ENCODE measurements at regions of chr18 and their contacts with region 1.

Region 1: GRCh38 chr18:267688-268552 is at the start of gene THOC1:
- DNase-seq: peak; percentile 88 to 95 (median 93)
- ATAC-seq: peak; percentile 96
- H3K4me3 ChIP-seq: peak within 1 kb of the TSS; percentile 99
- H3K4me3 Mint-ChIP-seq: peak within 1 kb of the TSS; percentile 93 to 100 (median 98)
- H3K27ac ChIP-seq: peak within 1 kb of the TSS; percentile 98
- H3K27ac Mint-ChIP-seq: peak within 1 kb of the TSS; percentile 99 to 100 (median 100)
- H3K4me1 ChIP-seq: peaks cover 11 to 18% of the 10 kb centered on the region in 2 donors
- H3K4me1 Mint-ChIP-seq: peaks cover 19 to 51% (median 38%) of the 10 kb centered on the region in 7 donors
- H3K27me3 ChIP-seq: no peaks in the 10 kb centered on the region
- H3K27me3 Mint-ChIP-seq: no peaks in the 10 kb centered on the region
- total RNA-seq, gene THOC1: 56.7 to 93.7 (median 74.5) TPM

Region 2: GRCh38 chr18:111292-112014 is 156.5 kb before region 1 on chr18:
- CTCF ChIA-PET with region 1: no interaction called
- POLR2A ChIA-PET with region 1: no interaction called
- intact Hi-C with region 1: loop called (anchors 5 kb)
- DNase-seq: peak; percentile 60 to 77 (median 75)
- ATAC-seq: no peak
- H3K4me3 ChIP-seq: peak overlapping the region; percentile 36
- H3K4me3 Mint-ChIP-seq: peak overlapping the region; percentile 79 to 91 (median 89)
- H3K27ac ChIP-seq: peak overlapping the region; percentile 82
- H3K27ac Mint-ChIP-seq: peak overlapping the region; percentile 85 to 99 (median 90)
- H3K4me1 ChIP-seq: peaks cover 0 to 5% of the 10 kb centered on the region in 2 donors
- H3K4me1 Mint-ChIP-seq: peaks cover 4 to 14% (median 7%) of the 10 kb centered on the region in 7 donors
- H3K27me3 ChIP-seq: no peaks in the 10 kb centered on the region
- H3K27me3 Mint-ChIP-seq: peaks cover 0 to 3% (median 0%) of the 10 kb centered on the region in 5 donors

Region 3: DNA sequence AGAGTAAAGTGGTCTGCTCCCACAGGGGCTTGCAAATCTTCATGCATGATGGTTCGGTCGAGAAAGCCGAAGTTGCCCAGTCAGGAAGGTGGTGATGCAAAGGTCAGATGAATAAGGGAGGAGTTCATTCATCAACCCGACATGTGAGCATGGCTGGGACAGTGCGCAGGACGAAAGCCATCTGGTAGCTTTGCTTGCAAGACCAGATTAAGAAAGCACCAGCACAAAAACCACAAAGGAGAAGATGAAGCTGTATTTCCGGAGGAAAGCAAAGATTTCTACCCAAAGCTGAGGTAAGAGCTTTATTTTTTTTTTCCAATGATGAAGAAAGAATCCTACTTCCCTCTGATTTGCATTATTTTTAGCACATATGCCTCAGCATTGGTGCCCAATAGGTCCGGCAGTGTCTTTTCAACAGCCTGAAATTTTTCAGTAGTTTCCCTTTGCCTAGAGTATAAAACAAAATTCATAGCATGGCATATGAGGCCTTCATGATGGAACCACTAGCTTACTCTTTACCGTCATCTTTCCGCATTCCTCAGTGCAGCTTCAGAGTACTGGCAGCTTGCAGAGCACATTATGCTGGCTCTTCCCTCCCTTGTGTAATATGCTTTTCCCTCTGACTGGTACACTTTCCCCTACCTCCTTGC is 111.9 kb after region 1 on chr18:
- CTCF ChIA-PET with region 1: no interaction called
- POLR2A ChIA-PET with region 1: no interaction called
- intact Hi-C with region 1: no loop called
- DNase-seq: no peak
- ATAC-seq: peak; percentile 75
- H3K4me3 ChIP-seq: no peak overlapping the region
- H3K4me3 Mint-ChIP-seq: no peak overlapping the region
- H3K27ac ChIP-seq: no peak overlapping the region
- H3K27ac Mint-ChIP-seq: peak overlapping the region in 1 of 9 donors; percentile 2
- H3K4me1 ChIP-seq: no peaks in the 10 kb centered on the region
- H3K4me1 Mint-ChIP-seq: peaks cover 0 to 3% (median 0%) of the 10 kb centered on the region in 7 donors
- H3K27me3 ChIP-seq: peaks cover 0 to 2% of the 10 kb centered on the region in 2 donors
- H3K27me3 Mint-ChIP-seq: peaks cover 14 to 35% (median 23%) of the 10 kb centered on the region in 5 donors

Region 4: GRCh38 chr18:596288-596881 is 328.5 kb after region 1 on chr18:
- CTCF ChIA-PET with region 1: no interaction called
- POLR2A ChIA-PET with region 1: interaction called, 3 read pairs
- intact Hi-C with region 1: loop called (anchors 2 kb)
- DNase-seq: peak in 1 of 9 donors; percentile 52
- ATAC-seq: peak; percentile 75
- H3K4me3 ChIP-seq: no peak overlapping the region
- H3K4me3 Mint-ChIP-seq: peak overlapping the region in 8 of 10 donors; percentile 55 to 64 (median 56)
- H3K27ac ChIP-seq: peak overlapping the region; percentile 33
- H3K27ac Mint-ChIP-seq: peak overlapping the region in 7 of 9 donors; percentile 8 to 83 (median 73)
- H3K4me1 ChIP-seq: peaks cover 4 to 5% of the 10 kb centered on the region in 2 donors
- H3K4me1 Mint-ChIP-seq: peaks cover 0 to 17% (median 12%) of the 10 kb centered on the region in 7 donors
- H3K27me3 ChIP-seq: peaks cover 0 to 5% of the 10 kb centered on the region in 2 donors
- H3K27me3 Mint-ChIP-seq: peaks cover 21 to 48% (median 34%) of the 10 kb centered on the region in 5 donors

Region 5: GRCh38 chr18:658001-658946 is 390.4 kb after region 1 on chr18:
- CTCF ChIA-PET with region 1: no interaction called
- POLR2A ChIA-PET with region 1: no interaction called
- intact Hi-C with region 1: loop called in 1 of 2 experiments (anchors 1 kb)
- DNase-seq: peak in 3 of 9 donors; percentile 20 to 78 (median 31)
- ATAC-seq: peak; percentile 68
- H3K4me3 ChIP-seq: peak overlapping the region; percentile 79
- H3K4me3 Mint-ChIP-seq: peak overlapping the region; percentile 81 to 96 (median 83)
- H3K27ac ChIP-seq: no peak overlapping the region
- H3K27ac Mint-ChIP-seq: peak overlapping the region in 1 of 9 donors; percentile 94
- H3K4me1 ChIP-seq: peaks cover 0 to 5% of the 10 kb centered on the region in 2 donors
- H3K4me1 Mint-ChIP-seq: peaks cover 0 to 50% (median 10%) of the 10 kb centered on the region in 7 donors
- H3K27me3 ChIP-seq: peaks cover 0 to 5% of the 10 kb centered on the region in 2 donors
- H3K27me3 Mint-ChIP-seq: peaks cover 0 to 43% (median 35%) of the 10 kb centered on the region in 5 donors

Region 6: DNA sequence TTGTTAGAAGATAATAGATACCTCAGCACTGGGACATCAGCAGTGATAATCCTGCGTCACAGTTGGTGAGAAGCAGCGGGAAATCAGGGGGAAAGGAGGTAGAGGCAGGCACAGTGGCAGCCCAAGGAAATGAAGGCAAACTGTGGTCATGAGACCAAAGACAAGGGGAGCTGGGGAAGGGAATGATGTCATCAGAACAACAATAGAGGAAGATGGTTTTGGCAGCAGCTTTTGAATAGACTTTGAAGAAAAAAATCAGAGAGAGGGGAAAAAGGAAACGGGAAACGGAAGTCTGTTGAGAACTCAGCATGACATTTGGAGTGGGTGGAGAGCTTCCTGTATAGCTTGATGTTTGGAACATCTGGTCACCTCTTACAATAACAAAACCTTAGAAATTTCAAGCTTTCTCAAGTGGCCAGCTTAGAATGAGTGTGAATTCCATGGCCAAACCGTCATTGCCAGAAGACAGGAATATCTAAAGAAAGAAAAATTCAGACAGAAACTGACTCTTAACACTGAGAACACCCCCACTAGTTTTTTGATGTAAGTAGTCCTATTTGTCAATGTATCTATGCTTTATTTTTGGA is 562.5 kb after region 1 on chr18:
- CTCF ChIA-PET with region 1: interaction called, 4 read pairs
- POLR2A ChIA-PET with region 1: no interaction called
- intact Hi-C with region 1: loop called in 1 of 2 experiments (anchors 5 kb)
- DNase-seq: peak in 7 of 9 donors; percentile 74 to 88 (median 85)
- ATAC-seq: peak; percentile 89
- H3K4me3 ChIP-seq: peak overlapping the region; percentile 6
- H3K4me3 Mint-ChIP-seq: peak overlapping the region; percentile 44 to 77 (median 66)
- H3K27ac ChIP-seq: peak overlapping the region; percentile 54
- H3K27ac Mint-ChIP-seq: peak overlapping the region; percentile 32 to 91 (median 77)
- H3K4me1 ChIP-seq: peaks cover 15 to 22% of the 10 kb centered on the region in 2 donors
- H3K4me1 Mint-ChIP-seq: peaks cover 10 to 40% (median 36%) of the 10 kb centered on the region in 7 donors
- H3K27me3 ChIP-seq: no peaks in the 10 kb centered on the region
- H3K27me3 Mint-ChIP-seq: peaks cover 0 to 11% (median 0%) of the 10 kb centered on the region in 5 donors

Region 7: DNA sequence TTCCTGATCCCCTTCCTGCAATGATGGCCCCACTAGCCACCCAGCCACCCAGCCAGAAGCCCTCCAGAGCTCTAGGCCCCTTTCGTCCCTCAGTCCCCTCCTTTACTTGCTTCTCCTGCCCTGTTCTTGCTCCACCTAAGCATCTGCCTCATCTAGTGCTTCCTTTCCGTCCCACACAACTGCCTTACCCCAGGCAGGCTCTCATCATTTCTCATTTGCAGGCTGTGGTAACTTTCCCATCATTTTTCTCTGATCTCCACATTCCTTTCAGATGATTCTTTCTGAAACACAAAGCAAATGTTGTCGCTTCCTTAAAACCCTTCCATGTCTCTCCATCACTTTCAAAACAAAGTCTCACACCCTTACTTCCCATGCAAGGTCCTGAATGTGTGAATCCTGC is 1843.5 kb after region 1 on chr18:
- CTCF ChIA-PET with region 1: no interaction called
- POLR2A ChIA-PET with region 1: no interaction called
- intact Hi-C with region 1: no loop called
- DNase-seq: no peak
- ATAC-seq: no peak
- H3K4me3 ChIP-seq: no peak overlapping the region
- H3K4me3 Mint-ChIP-seq: no peak overlapping the region
- H3K27ac ChIP-seq: no peak overlapping the region
- H3K27ac Mint-ChIP-seq: no peak overlapping the region
- H3K4me1 ChIP-seq: no peaks in the 10 kb centered on the region
- H3K4me1 Mint-ChIP-seq: no peaks in the 10 kb centered on the region
- H3K27me3 ChIP-seq: peaks cover 0 to 5% of the 10 kb centered on the region in 2 donors
- H3K27me3 Mint-ChIP-seq: peaks cover 3 to 57% (median 41%) of the 10 kb centered on the region in 5 donors

Measured in naive thymus-derived CD4-positive, alpha-beta T cell (primary cell).